ENCODE measurements at regions of chr16 and their contacts with region 1.

Region 1: GRCh38 chr16:59170099-59170712 is 436.1 kb upstream of the GOT2 start:
- DNase-seq: no peak
- ATAC-seq: no peak
- H3K4me3 ChIP-seq: no peak overlapping the region
- H3K27ac ChIP-seq: no peak overlapping the region
- H3K4me1 ChIP-seq: no peaks in the 10 kb centered on the region
- H3K27me3 ChIP-seq: peaks cover 0 to under 1% (median 0%) of the 10 kb centered on the region in 3 donors
- CTCF ChIP-seq: no peak

Region 2: DNA sequence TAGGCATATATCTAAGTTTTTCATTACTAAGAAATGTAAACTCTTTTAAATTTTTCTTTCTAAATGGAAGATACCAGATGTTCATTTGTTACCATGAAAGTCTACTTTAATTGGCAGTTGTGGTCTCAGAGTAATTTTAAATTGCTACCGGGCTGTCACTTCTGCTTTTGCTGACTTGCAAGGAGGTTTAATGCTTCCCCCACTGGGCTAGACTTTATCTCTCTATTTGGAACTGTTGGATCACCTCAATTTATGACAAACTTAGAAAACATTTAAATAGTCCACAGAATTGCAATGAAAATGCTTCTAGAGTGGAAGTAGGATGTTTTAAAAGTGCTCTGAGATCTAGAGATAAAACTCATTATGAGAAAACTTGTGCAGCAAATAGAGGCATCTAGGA is 43.7 kb after region 1 on chr16:
- intact Hi-C with region 1: loop called in 1 of 2 experiments (anchors 1 kb)
- DNase-seq: no peak
- ATAC-seq: no peak
- H3K4me3 ChIP-seq: no peak overlapping the region
- H3K27ac ChIP-seq: no peak overlapping the region
- H3K4me1 ChIP-seq: no peaks in the 10 kb centered on the region
- H3K27me3 ChIP-seq: no peaks in the 10 kb centered on the region
- CTCF ChIP-seq: no peak